ENCODE measurements at regions of chr9 and their contacts with region 1.

Region 1: GRCh38 chr9:105637787-105638395 is 24.4 kb upstream of the TAL2 start:
- DNase-seq: no peak
- ATAC-seq: peak; percentile 28; the same call in 1 of the 3 replicates
- H3K4me3 ChIP-seq: no peak overlapping the region
- H3K27ac ChIP-seq: no peak overlapping the region
- H3K4me1 ChIP-seq: no peaks in the 10 kb centered on the region
- H3K27me3 ChIP-seq: no peaks in the 10 kb centered on the region
- CTCF ChIP-seq: peak; percentile 29; the same call in 1 of the 2 replicates
- EP300 ChIP-seq: no peak
- POLR2A ChIP-seq: no peak
- RAD21 ChIP-seq: no peak

Region 2: DNA sequence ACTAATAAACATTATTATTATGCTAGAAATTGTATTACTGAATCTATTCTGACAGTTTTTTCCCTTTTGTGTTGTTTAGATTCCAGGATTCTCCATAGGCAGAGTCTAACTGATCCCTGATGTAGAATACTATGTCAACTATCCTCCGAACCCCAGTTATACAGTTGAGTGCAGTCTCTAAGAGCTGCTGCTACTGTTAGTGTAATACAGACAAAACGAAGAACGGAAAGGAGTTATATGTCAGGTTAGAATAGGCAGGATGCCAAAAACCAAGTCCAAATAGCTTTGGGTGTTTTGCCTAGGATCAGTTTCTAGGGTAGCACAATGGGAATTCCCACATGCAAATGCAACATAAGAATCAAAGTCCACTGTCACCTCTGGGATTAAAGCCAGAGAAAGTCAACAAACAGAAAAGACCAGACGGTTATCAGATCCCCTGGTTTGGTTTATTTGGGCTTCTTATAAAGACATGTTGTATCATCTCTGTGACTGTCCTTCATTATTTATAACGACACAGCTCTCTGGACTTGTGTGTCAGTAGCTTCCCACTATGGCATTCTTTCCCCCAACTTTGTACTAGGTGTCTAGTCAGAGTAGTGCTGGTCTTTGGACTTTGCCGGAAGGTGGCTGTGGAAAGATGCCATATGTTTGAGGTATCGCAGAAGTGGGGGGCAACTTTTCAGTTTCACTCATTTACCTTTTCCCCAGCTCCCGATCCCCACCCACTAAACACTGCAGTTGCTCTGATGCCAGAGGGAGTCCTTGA is 41.5 kb after region 1 on chr9:
- CTCF ChIA-PET with region 1: no interaction called
- POLR2A ChIA-PET with region 1: no interaction called
- in situ Hi-C with region 1: no loop called
- intact Hi-C with region 1: loop called (anchors 5 kb)
- DNase-seq: peak; percentile 89
- ATAC-seq: peak; percentile 90
- H3K4me3 ChIP-seq: peak overlapping the region in 2 of 3 experiments; percentile 10 to 22; a peak in 3 of 6 replicates
- H3K27ac ChIP-seq: no peak overlapping the region
- H3K4me1 ChIP-seq: peaks cover 30% of the 10 kb centered on the region
- H3K27me3 ChIP-seq: no peaks in the 10 kb centered on the region; a peak in 1 of 5 replicates
- CTCF ChIP-seq: no peak
- EP300 ChIP-seq: peak in 1 of 2 experiments; percentile 52; a peak in 2 of 4 replicates
- POLR2A ChIP-seq: no peak
- RAD21 ChIP-seq: no peak

Region 3: DNA sequence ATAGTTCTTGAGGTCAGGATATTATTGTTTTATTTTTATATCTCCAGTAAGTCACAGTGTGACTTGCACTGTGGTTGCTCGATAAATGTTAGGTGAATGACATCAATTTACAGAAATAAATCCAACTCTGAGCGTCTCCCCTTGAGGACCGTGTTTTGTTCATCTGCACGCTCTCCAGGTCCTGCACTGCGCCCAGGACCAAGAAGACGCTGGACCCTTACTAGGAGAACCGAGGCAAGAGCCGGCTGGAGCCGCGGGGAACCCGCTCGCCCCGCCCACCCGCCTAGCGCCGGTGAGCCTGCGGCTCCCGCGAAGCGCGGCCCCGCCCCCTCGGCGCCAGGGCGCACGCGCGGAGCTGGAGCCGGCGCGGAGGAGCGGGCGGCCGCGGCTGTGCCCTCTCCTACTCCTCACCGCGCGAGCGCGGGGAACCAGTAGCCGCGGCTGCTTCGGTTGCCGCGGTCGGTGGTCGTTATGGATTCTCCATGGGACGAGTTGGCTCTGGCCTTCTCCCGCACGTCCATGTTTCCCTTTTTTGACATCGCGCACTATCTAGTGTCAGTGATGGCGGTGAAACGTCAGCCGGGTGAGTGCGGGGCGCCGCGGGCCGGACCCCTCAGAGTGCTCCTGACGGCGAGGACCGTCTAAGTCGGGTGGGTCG is 56.4 kb after region 1 on chr9 and contains the start of gene TMEM38B:
- CTCF ChIA-PET with region 1: no interaction called
- POLR2A ChIA-PET with region 1: no interaction called
- in situ Hi-C with region 1: no loop called
- intact Hi-C with region 1: no loop called
- DNase-seq: peak; percentile 50
- ATAC-seq: peak; percentile 93
- H3K4me3 ChIP-seq: peak within 1 kb of the TSS; percentile 77 to 92 (median 82)
- H3K27ac ChIP-seq: peak within 1 kb of the TSS; percentile 43
- H3K4me1 ChIP-seq: peaks cover 31% of the 10 kb centered on the region
- H3K27me3 ChIP-seq: no peaks in the 10 kb centered on the region; a peak in 1 of 5 replicates
- CTCF ChIP-seq: no peak
- EP300 ChIP-seq: no peak
- POLR2A ChIP-seq: peak; percentile 55 to 74; a peak in 3 of 4 replicates
- RAD21 ChIP-seq: no peak
- total RNA-seq, gene TMEM38B: 26.0 and 32.4 TPM in 2 replicates

Region 4: GRCh38 chr9:105712773-105713172 is 74.9 kb after region 1 on chr9:
- CTCF ChIA-PET with region 1: no interaction called
- POLR2A ChIA-PET with region 1: no interaction called
- in situ Hi-C with region 1: no loop called
- intact Hi-C with region 1: loop called (anchors 5 kb)
- DNase-seq: no peak
- ATAC-seq: no peak
- H3K4me3 ChIP-seq: no peak overlapping the region
- H3K27ac ChIP-seq: no peak overlapping the region
- H3K4me1 ChIP-seq: no peaks in the 10 kb centered on the region
- H3K27me3 ChIP-seq: no peaks in the 10 kb centered on the region
- CTCF ChIP-seq: no peak
- EP300 ChIP-seq: no peak
- POLR2A ChIP-seq: no peak
- RAD21 ChIP-seq: no peak

Region 5: DNA sequence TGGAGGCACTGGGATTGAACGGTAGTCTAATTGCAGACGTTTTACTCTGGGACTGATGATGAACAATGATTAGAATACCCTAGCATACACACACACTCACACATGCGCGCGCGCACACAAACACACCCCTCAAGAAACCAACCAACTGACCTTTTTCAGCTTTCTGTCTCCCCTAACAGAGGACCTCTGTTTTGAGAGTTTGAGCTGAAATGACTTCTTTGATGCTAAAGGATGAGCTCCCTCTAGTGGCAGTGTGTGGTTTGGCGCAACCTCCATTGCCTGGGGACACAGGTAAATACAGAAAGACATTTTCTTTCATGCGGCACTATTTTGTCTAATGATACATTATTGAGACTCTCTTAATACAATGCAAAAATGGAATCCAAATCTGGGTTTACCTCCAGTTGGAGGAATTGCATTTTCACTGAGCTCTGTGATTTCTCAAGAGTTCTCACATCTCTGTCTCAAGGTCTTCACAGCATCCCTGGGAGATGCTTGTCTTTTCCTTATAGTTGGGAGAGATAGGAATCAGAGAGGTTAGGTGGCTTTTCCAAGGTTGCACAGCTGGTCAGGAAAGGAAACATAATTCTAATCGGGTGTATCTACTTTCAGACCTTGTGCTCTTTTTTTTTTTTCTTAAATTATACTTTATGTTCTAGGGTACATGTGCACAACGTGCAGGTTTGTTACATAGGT is 243.9 kb after region 1 on chr9:
- CTCF ChIA-PET with region 1: no interaction called
- POLR2A ChIA-PET with region 1: no interaction called
- in situ Hi-C with region 1: no loop called
- intact Hi-C with region 1: no loop called
- DNase-seq: peak; percentile 65
- ATAC-seq: peak; percentile 96
- H3K4me3 ChIP-seq: no peak overlapping the region
- H3K27ac ChIP-seq: no peak overlapping the region
- H3K4me1 ChIP-seq: no peaks in the 10 kb centered on the region
- H3K27me3 ChIP-seq: peaks cover 0 to 1% of the 10 kb centered on the region in 2 experiments; a peak in 2 of 5 replicates
- CTCF ChIP-seq: peak; percentile 84
- EP300 ChIP-seq: no peak
- POLR2A ChIP-seq: no peak
- RAD21 ChIP-seq: peak; percentile 61

Measured in HepG2 (cell line).